Activated B cell treated with CpG ODN at 0.5 μM for 24 hours (primary cell): ENCODE measurements at regions of chr5 and their contacts with region 1.

Region 1: GRCh38 chr5:77491783-77492652 is at the start of gene WDR41:
- DNase-seq: peak; percentile 87
- ATAC-seq: peak; percentile 82
- H3K4me3 Mint-ChIP-seq: peak within 1 kb of the TSS; percentile 91
- H3K27ac Mint-ChIP-seq: peak within 1 kb of the TSS; percentile 93
- H3K4me1 Mint-ChIP-seq: peaks cover 22% of the 10 kb centered on the region
- H3K27me3 Mint-ChIP-seq: peaks cover 7% of the 10 kb centered on the region
- CTCF ChIP-seq: no peak
- total RNA-seq, gene WDR41: 29.2 and 33.0 TPM in 2 replicates

Region 2: DNA sequence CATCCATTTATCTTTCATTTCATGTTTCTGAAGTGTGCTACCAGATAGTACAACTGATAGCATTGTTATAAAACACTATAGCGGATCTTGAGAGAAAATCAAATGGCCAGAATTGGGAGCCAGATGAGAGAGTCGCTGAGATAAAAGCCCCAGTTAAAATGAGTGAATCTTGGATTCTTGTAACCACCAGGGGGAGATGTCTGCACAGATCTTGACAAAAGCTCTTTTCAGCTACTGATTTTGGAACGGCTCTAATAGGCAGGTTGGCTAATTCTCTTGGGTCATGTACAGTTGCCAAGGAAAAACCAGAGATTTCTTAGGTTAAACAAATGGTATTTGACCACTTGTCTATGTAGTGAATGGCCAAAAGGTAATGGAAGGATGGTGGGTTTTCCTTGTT is 890.5 kb before region 1 on chr5:
- CTCF ChIA-PET with region 1: no interaction called
- POLR2A ChIA-PET with region 1: no interaction called
- intact Hi-C with region 1: loop called (anchors 5 kb)
- DNase-seq: no peak
- ATAC-seq: peak; percentile 49
- H3K4me3 Mint-ChIP-seq: no peak overlapping the region
- H3K27ac Mint-ChIP-seq: no peak overlapping the region
- H3K4me1 Mint-ChIP-seq: no peaks in the 10 kb centered on the region
- H3K27me3 Mint-ChIP-seq: no peaks in the 10 kb centered on the region
- CTCF ChIP-seq: no peak

Region 3: DNA sequence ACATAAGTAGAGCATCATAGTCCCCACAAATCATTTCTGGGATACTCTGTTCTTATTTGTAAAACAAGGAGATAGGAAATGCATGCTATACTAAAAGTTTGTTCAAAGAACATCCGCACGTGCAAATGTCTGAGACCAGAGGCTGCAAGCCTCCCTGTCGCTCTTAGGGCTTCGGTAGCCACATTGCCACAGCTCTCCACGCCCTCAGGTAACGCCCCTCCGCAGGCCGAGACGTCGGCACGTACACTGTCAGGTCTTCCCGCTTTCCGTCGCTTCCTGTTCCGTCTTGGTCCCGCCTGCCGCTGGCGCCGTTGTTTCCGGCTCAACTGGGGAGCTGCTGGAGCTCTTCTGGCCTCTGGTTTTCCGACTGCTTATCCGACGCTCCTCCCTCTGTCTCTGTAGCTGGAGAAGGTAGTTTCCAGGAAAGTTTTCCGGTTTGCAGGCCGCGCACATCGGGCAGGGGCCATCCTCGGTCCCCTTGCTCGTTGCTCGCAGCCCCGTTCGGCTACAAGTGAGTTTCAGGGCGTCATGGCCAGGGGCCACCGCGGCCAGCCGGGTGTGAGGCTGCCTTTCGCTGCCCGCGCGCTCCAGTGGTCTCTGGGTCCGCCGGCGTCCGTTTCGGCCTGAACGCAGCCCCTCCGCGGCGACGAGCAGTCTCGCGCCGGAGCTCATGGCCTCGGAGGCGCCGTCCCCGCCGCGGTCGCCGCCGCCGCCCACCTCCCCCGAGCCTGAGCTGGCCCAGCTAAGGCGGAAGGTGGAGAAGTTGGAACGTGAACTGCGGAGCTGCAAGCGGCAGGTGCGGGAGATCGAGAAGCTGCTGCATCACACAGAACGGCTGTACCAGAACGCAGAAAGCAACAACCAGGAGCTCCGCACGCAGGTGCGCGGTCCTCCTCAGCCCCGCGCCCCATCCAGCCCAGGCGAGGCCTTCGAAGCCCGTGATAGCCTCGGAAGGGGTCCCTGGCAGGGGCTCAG is 461.6 kb before region 1 on chr5 and contains the start of gene AGGF1:
- CTCF ChIA-PET with region 1: interaction called, 4 read pairs
- POLR2A ChIA-PET with region 1: interaction called, 10 read pairs
- intact Hi-C with region 1: loop called (anchors 1 kb)
- DNase-seq: peak; percentile 79
- ATAC-seq: peak; percentile 99
- H3K4me3 Mint-ChIP-seq: peak within 1 kb of the TSS; percentile 99
- H3K27ac Mint-ChIP-seq: peak within 1 kb of the TSS; percentile 89
- H3K4me1 Mint-ChIP-seq: peaks cover 28% of the 10 kb centered on the region
- H3K27me3 Mint-ChIP-seq: peaks cover 8% of the 10 kb centered on the region
- CTCF ChIP-seq: no peak
- total RNA-seq, gene AGGF1: 22.2 and 26.5 TPM in 2 replicates

Region 4: GRCh38 chr5:77143998-77144836 is 347.8 kb before region 1 on chr5:
- CTCF ChIA-PET with region 1: interaction called, 20 read pairs
- POLR2A ChIA-PET with region 1: no interaction called
- intact Hi-C with region 1: loop called (anchors 1 kb)
- DNase-seq: no peak
- ATAC-seq: peak; percentile 65
- H3K4me3 Mint-ChIP-seq: no peak overlapping the region
- H3K27ac Mint-ChIP-seq: no peak overlapping the region
- H3K4me1 Mint-ChIP-seq: peaks cover 2% of the 10 kb centered on the region
- H3K27me3 Mint-ChIP-seq: peaks cover 2% of the 10 kb centered on the region
- CTCF ChIP-seq: no peak

Region 5: GRCh38 chr5:77301447-77301883 is 190.6 kb before region 1 on chr5:
- CTCF ChIA-PET with region 1: no interaction called
- POLR2A ChIA-PET with region 1: no interaction called
- intact Hi-C with region 1: loop called (anchors 2 kb)
- DNase-seq: no peak
- ATAC-seq: no peak
- H3K4me3 Mint-ChIP-seq: no peak overlapping the region
- H3K27ac Mint-ChIP-seq: no peak overlapping the region
- H3K4me1 Mint-ChIP-seq: no peaks in the 10 kb centered on the region
- H3K27me3 Mint-ChIP-seq: no peaks in the 10 kb centered on the region
- CTCF ChIP-seq: no peak

Region 6: DNA sequence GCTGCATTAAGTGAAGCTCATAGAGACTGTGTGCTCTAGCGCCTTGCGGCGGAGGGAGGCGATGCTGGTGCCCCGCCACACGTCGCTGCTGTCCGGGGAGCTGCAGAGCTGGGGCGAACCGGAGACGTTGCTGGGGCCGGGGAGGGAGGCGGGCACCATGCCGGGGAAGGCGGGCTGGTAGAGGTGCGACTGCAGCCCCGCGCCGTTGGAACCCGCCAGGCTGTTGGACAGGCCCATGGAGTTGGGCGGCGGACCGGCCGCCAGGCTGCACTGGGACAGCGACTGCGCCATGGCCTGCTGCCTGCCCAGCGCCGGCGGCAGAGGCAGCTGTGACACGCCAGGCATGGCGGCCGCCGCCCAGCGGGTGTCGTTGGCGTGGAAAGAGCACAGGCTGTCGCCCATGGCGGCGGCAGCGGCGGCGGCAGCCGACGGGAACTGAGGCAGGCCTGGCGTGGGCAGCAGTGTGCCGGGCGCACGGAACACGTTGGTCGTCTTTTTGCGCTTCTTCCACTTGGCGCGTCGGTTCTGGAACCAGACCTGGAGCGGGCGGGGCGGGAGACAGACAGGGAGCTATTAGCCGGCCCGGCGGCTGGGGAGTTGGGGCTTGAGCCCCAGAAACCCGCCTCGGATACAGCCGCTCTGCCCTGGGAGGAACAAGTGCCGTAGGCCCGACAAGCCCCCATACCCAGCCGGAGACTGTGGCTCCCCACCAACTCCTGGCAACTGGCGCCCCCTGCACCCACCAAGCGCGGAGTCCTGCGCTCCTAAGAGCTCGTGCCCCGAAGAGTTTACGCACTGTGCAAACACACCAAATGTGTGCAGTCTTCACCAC is 138.5 kb after region 1 on chr5:
- CTCF ChIA-PET with region 1: no interaction called
- POLR2A ChIA-PET with region 1: no interaction called
- intact Hi-C with region 1: loop called (anchors 5 kb)
- DNase-seq: peak; percentile 49
- ATAC-seq: peak; percentile 79
- H3K4me3 Mint-ChIP-seq: peak overlapping the region; percentile 82
- H3K27ac Mint-ChIP-seq: peak overlapping the region; percentile 56
- H3K4me1 Mint-ChIP-seq: peaks cover 28% of the 10 kb centered on the region
- H3K27me3 Mint-ChIP-seq: peaks cover 41% of the 10 kb centered on the region
- CTCF ChIP-seq: no peak

Region 7: DNA sequence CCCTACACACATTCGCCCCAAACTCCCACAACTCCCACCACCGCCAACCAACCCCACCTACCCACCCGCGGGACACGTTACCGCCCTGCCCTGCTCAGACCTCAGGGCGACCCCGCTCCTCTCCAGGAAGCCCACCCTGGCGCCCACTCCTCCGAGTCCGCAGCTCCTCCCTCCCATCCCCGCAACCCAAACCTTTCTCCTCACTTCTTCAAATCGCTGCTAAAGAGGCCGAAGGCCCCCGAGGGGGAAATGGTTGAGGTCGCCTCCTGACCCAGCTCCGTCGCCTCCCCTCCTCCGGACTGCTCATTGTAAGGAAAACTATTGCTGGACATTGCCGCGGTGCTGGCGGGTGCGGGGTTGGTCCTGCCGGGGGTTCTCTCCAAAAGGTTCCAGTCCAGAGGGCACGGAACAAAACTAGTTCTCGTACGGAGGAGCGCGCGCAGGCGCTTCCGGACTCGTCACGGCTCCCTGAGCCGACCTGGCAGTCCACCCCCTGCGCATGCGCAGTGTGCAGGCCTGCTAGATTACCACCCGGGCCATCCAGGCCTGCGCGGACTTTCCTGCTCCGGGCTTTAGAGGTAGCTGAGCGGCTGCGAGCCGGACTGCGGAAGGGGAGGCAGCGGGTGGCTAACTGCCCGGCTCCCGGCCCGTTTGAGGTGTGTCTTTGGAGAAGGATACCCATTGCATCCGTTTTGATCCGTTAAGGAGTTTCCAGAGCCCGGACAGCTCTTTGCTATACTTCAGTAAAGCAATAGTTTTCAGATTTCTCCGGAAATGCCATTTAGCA is 802.4 kb after region 1 on chr5 and contains the start of gene AP3B1:
- CTCF ChIA-PET with region 1: no interaction called
- POLR2A ChIA-PET with region 1: interaction called, 9 read pairs
- intact Hi-C with region 1: loop called (anchors 1 kb)
- DNase-seq: peak; percentile 96
- ATAC-seq: peak; percentile 94
- H3K4me3 Mint-ChIP-seq: peak within 1 kb of the TSS; percentile 98
- H3K27ac Mint-ChIP-seq: peak within 1 kb of the TSS; percentile 98
- H3K4me1 Mint-ChIP-seq: peaks cover 44% of the 10 kb centered on the region
- H3K27me3 Mint-ChIP-seq: no peaks in the 10 kb centered on the region
- CTCF ChIP-seq: no peak
- total RNA-seq, gene AP3B1: 46.8 and 52.9 TPM in 2 replicates